Testis (tissue), 5 donors: ENCODE measurements at regions of chr14 and their contacts with region 1.

Region 1: GRCh38 chr14:102917469-102918211 is 4.8 kb upstream of the AMN start:
- DNase-seq: peak; percentile 80
- H3K4me3 ChIP-seq: no peak overlapping the region
- H3K27ac ChIP-seq: no peak overlapping the region
- H3K4me1 ChIP-seq: no peaks in the 10 kb centered on the region
- H3K27me3 ChIP-seq: no peaks in the 10 kb centered on the region
- CTCF ChIP-seq: peak in 2 of 3 experiments; percentile 52 to 54
- POLR2A ChIP-seq: no peak

Region 2: GRCh38 chr14:102694530-102695166 is 223.0 kb before region 1 on chr14:
- intact Hi-C with region 1: loop called (anchors 10 kb)
- DNase-seq: peak; percentile 88
- H3K4me3 ChIP-seq: no peak overlapping the region
- H3K27ac ChIP-seq: peak overlapping the region in 1 of 2 donors; percentile 28
- H3K4me1 ChIP-seq: peaks cover 19% of the 10 kb centered on the region
- H3K27me3 ChIP-seq: no peaks in the 10 kb centered on the region
- CTCF ChIP-seq: peak; percentile 50 to 70 (median 64)
- POLR2A ChIP-seq: no peak